ENCODE measurements at regions of chr1 and their contacts with region 1.

Region 1: DNA sequence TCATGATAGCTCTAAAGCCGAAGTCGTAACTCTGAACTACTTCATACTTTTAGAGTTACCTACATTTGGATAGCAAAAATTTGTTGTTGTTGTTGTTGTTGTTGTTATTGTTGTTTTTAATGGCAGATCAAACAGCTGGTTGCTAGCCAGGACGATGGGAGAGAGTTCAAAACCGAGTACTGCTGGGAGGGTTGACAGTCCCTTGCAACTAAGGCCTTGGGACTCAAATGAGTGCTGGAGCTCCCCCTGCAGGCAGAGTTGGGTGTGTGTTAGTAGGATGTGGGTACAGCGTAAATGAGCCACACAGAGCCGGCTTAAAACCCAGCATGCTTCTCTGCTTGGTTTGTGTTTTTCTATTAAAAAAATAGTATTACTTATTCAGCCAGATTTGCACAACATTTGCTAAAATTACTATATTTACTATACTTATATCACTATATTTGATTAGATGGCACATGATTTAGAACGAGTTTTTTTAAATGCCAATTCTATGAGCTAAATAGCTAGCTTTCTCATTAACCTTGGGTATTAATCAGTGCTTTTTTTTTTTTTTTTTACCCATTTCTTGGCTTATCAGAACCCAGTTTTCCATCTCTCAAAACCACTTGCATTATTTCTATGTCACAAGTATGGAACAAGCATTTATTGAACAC is 129.2 kb upstream of the SYT6 start:
- DNase-seq: peak; percentile 70 to 91 (median 78)
- ATAC-seq: peak; percentile 100
- H3K4me3 ChIP-seq: no peak overlapping the region
- H3K4me3 Mint-ChIP-seq: no peak overlapping the region
- H3K27ac ChIP-seq: no peak overlapping the region
- H3K27ac Mint-ChIP-seq: no peak overlapping the region
- H3K4me1 ChIP-seq: no peaks in the 10 kb centered on the region
- H3K4me1 Mint-ChIP-seq: no peaks in the 10 kb centered on the region
- H3K27me3 ChIP-seq: no peaks in the 10 kb centered on the region
- H3K27me3 Mint-ChIP-seq: no peaks in the 10 kb centered on the region
- CTCF ChIP-seq: peak; percentile 84

Region 2: DNA sequence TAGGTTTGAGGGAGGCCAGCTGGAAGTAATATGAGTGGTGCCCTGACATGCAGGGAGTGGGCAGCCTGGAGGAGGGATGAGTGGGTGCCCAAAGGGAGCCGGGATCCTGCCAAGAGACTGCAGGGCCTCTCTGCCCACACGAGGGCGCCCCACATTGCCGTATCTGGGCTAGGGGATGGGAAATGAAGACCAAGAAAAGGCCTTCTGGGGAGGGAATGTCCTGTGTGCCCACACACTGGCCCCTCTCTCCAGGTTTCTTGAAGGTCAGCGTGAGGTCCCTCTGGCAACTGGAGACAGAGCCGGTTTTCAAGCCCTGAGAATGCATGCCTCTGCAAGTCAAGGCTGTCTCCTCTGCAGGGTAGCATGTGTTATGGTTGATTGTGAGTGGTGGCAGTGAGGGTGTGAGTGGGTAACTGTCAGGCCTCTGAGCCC is 1473.6 kb before region 1 on chr1:
- CTCF ChIA-PET with region 1: no interaction called
- POLR2A ChIA-PET with region 1: no interaction called
- intact Hi-C with region 1: loop called in 1 of 2 experiments (anchors 5 kb)
- DNase-seq: peak; percentile 28 to 67 (median 43)
- ATAC-seq: peak; percentile 54
- H3K4me3 ChIP-seq: no peak overlapping the region
- H3K4me3 Mint-ChIP-seq: no peak overlapping the region
- H3K27ac ChIP-seq: no peak overlapping the region
- H3K27ac Mint-ChIP-seq: no peak overlapping the region
- H3K4me1 ChIP-seq: no peaks in the 10 kb centered on the region
- H3K4me1 Mint-ChIP-seq: no peaks in the 10 kb centered on the region
- H3K27me3 ChIP-seq: no peaks in the 10 kb centered on the region
- H3K27me3 Mint-ChIP-seq: peaks cover 7% of the 10 kb centered on the region
- CTCF ChIP-seq: peak; percentile 68

Measured in CD4-positive, alpha-beta T cell (primary cell).